ENCODE measurements at regions of chr14 and their contacts with region 1.

Region 1: GRCh38 chr14:90903101-90903500 is 86.9 kb upstream of the TTC7B start:
- DNase-seq: peak; percentile 13
- ATAC-seq: peak; percentile 88
- H3K4me3 ChIP-seq: no peak overlapping the region
- H3K27ac ChIP-seq: no peak overlapping the region
- H3K4me1 ChIP-seq: no peaks in the 10 kb centered on the region
- H3K27me3 ChIP-seq: no peaks in the 10 kb centered on the region
- CTCF ChIP-seq: peak; percentile 69; the same call in 1 of the 2 replicates

Region 2: DNA sequence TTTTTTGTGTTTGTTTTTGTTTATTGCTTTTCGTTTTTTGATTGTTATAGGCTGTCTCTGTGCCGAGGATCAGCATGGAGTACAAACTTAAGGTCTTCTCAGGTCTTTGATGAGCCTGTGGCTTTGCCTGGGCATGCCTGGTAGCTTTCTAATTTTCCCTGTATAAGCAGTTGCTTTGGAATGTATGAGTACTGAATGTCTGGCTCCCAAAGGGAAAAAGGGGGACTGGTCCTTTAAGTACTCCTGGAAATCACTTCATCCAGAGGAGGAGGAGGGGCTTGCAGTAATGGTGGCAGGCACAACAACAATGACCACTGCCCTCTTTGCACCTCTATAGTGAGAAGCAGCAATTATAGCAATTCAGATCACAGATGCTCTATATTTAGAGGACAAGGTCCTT is 19.3 kb before region 1 on chr14:
- CTCF ChIA-PET with region 1: no interaction called
- POLR2A ChIA-PET with region 1: no interaction called
- in situ Hi-C with region 1: no loop called
- intact Hi-C with region 1: no loop called
- DNase-seq: no peak
- ATAC-seq: no peak
- H3K4me3 ChIP-seq: no peak overlapping the region
- H3K27ac ChIP-seq: no peak overlapping the region
- H3K4me1 ChIP-seq: no peaks in the 10 kb centered on the region
- H3K27me3 ChIP-seq: no peaks in the 10 kb centered on the region
- CTCF ChIP-seq: no peak

Region 3: GRCh38 chr14:91140672-91141071 is 237.6 kb after region 1 on chr14:
- CTCF ChIA-PET with region 1: no interaction called
- POLR2A ChIA-PET with region 1: no interaction called
- in situ Hi-C with region 1: no loop called
- intact Hi-C with region 1: loop called (anchors 5 kb)
- DNase-seq: no peak
- ATAC-seq: peak; percentile 76
- H3K4me3 ChIP-seq: no peak overlapping the region
- H3K27ac ChIP-seq: no peak overlapping the region
- H3K4me1 ChIP-seq: no peaks in the 10 kb centered on the region
- H3K27me3 ChIP-seq: no peaks in the 10 kb centered on the region
- CTCF ChIP-seq: peak; percentile 57

Region 4: GRCh38 chr14:91177073-91178034 is 274.3 kb after region 1 on chr14:
- CTCF ChIA-PET with region 1: interaction called, 10 read pairs
- POLR2A ChIA-PET with region 1: no interaction called
- in situ Hi-C with region 1: no loop called
- intact Hi-C with region 1: loop called (anchors 2 kb)
- DNase-seq: peak; percentile 46
- ATAC-seq: peak; percentile 66; the same call in 1 of the 2 replicates
- H3K4me3 ChIP-seq: no peak overlapping the region
- H3K27ac ChIP-seq: no peak overlapping the region
- H3K4me1 ChIP-seq: no peaks in the 10 kb centered on the region
- H3K27me3 ChIP-seq: no peaks in the 10 kb centered on the region
- CTCF ChIP-seq: peak; percentile 83

Measured in Panc1 (cell line).